ENCODE measurements at regions of chr2 and their contacts with region 1.

Region 1: GRCh38 chr2:64653349-64654062 is at the start of gene SERTAD2:
- DNase-seq: peak; percentile 95
- CTCF ChIP-seq: no peak

Region 2: DNA sequence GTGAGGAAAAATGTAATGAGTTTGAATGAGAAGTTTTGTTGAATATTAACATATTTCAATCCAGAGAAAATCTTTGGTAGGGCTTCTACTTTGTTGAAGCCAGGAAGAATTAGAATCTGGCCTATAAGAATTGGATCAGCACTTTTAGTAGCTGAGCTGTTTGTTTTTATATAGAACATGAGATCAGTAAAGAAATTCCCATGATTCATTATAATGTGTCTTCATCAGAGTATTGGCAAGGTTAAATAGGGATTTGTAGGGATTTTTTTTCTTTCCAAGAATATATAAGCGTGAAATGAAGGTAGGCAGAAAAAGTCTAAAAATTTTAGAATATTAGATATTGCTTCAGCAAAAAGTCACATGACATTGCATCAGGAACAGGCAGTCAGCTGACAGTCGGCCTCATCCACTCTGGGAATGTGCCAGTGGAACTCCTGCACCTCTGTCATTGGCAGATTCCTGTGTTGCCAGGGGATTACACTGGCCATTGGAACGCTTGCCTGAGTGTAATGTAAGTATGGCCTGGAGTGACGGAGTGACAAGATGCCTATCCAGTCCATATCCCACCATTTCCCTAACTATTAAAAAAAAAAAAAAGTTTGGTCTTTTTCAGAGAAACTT is 60.4 kb before region 1 on chr2:
- CTCF ChIA-PET with region 1: no interaction called
- POLR2A ChIA-PET with region 1: no interaction called
- DNase-seq: no peak
- CTCF ChIP-seq: no peak

Region 3: DNA sequence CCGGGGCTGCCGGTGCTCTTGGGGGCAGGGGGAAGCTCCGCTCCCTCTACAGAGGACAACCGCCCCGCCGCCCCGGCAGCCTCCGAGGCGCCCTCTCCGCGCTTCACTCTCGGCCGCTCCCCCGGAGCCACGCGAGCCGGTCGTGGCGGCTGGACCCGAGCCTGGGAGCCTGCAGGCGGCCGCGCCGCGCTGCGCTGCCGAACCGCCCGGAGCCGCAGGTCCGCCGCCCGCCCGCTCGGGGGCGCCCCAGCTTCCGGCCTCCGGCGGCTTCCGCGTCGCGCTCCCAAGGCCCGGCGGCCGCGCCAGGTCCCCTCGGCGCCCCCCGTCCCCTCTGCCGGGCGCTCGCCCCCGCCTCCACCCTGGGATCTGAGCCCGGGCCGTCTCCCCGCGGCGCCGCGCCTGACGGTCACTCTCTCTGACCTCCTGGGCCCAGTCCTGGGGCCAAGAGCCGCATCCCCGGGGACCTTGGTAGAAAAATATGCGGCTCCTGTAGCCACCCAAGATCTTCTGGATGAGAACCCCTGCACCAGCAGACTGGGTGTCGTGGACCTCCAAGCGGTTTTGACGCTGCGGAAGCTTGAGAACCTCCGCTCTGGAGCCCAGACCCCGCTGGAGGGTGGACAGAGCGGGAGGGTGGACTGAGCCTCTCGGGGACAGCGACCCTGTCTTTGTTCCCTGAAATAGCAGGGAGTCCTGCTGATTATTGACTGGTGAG is 44.1 kb before region 1 on chr2:
- CTCF ChIA-PET with region 1: interaction called, 21 read pairs
- POLR2A ChIA-PET with region 1: interaction called, 14 read pairs
- DNase-seq: peak; percentile 91
- CTCF ChIP-seq: peak; percentile 82

Region 4: GRCh38 chr2:64666810-64667438 is 13.4 kb after region 1 on chr2:
- CTCF ChIA-PET with region 1: interaction called, 53 read pairs
- POLR2A ChIA-PET with region 1: interaction called, 8 read pairs
- DNase-seq: no peak
- CTCF ChIP-seq: no peak

Region 5: DNA sequence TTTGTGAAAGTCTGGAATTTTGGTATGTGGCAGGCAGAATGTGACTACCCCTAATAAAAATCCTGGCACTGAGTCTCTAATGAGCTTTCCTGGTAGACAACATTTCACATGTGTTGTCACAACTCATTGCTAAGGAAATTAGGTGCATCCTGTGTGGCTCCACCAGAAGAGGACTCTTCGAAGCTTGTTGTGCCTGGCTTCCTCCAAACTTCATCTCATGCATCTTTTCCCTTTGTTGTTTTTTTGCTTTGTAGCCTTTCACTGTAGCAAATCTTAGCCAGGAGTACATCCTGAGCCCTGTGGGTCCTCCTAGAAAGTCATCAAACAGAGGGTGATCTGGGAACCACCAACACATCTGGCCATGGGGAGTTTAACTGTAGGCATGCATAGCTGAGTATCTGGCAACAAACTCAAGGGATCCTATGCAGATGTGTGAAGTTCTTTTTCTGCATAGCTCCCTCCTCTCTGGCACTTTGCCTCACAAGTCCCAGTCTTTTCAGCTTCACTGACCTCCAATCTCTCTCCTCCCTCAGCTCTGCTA is 42.3 kb after region 1 on chr2:
- CTCF ChIA-PET with region 1: interaction called, 14 read pairs
- POLR2A ChIA-PET with region 1: interaction called, 12 read pairs
- DNase-seq: no peak
- CTCF ChIP-seq: no peak

Region 6: GRCh38 chr2:64750817-64751285 is 97.3 kb after region 1 on chr2:
- CTCF ChIA-PET with region 1: interaction called, 59 read pairs
- POLR2A ChIA-PET with region 1: interaction called, 57 read pairs
- DNase-seq: peak; percentile 97
- CTCF ChIP-seq: peak; percentile 4

Region 7: DNA sequence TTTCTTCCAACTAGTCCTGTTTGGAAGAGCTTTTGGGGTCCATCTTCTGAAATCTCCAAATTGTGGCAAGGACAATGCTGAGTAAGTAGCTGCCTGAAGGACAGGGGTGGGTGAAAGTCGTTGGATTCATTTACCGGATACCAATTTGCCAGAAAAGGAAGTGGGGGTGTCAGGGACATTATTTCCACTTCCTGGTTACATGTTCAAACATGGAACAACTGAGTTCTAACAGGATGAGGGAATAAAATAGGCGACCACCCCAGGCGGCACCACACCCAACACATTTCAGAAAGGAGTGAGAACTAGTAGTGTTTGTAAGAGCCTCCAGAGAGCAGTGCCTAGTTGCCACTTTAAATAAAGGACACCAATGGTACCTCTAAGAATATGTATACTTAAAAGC is 158.8 kb after region 1 on chr2:
- CTCF ChIA-PET with region 1: no interaction called
- POLR2A ChIA-PET with region 1: no interaction called
- DNase-seq: no peak
- CTCF ChIP-seq: no peak